Kidney (tissue), 22 donors: ENCODE measurements at regions of chr1 and their contacts with region 1.

Region 1: GRCh38 chr1:204503122-204503912 is 8.7 kb upstream of the PIK3C2B start:
- DNase-seq: peak in 2 of 5 donors; percentile 89 to 90
- H3K4me3 ChIP-seq: peak overlapping the region in 1 of 3 donors; percentile 14
- H3K27ac ChIP-seq: peak overlapping the region in 1 of 2 donors; percentile 58
- H3K4me1 ChIP-seq: peaks cover 2 to 5% (median 3%) of the 10 kb centered on the region in 3 donors
- H3K27me3 ChIP-seq: no peaks in the 10 kb centered on the region
- CTCF ChIP-seq: peak; percentile 81

Region 2: DNA sequence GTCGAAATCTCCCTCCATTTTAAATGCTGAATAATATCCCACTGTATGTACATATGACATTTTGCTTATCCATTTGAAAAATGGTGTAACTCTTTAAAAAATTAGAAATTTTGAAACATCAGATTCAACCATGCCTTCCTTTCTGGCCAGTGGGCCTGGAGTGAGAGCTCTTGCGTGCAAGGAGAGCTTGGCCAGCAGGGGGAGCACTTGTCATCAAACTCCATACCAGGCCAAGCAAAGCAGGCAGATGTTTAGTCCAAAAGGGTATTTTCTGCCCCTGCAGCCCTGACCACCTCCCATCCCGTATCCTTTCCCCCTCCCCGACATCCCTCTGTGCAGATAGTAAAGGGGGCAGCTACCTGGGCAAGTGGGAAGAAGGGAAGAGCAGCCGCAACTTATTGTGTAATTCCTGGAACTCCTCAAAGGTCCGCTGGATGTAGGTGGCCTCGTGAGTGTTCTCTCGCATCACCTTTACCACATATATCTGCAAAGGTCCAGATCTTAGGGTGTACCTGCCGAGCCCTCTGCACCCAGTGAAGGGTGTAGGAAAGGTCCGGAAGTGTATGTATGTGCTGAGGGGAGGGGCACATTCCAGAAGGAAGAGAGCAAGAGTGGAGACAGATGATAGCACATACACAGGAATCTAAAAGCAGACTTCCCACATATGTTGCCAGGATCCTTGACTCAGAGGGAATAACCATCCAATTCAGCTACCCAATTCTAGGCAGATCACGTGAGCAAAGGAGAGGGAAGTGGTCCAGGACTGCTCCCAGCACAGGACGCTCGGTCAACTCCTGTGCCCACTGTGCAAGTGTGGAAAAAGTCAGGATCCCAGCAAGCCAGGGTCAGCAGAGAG is 71.8 kb before region 1 on chr1:
- intact Hi-C with region 1: loop called (anchors 5 kb)
- DNase-seq: peak; percentile 76 to 91 (median 82)
- H3K4me3 ChIP-seq: no peak overlapping the region
- H3K27ac ChIP-seq: no peak overlapping the region
- H3K4me1 ChIP-seq: no peaks in the 10 kb centered on the region
- H3K27me3 ChIP-seq: no peaks in the 10 kb centered on the region
- CTCF ChIP-seq: peak; percentile 93